Activated CD8-positive, alpha-beta T cell treated with anti-CD3 and anti-CD28 coated beads for 36 hours (primary cell): ENCODE measurements at regions of chr3 and their contacts with region 1.

Region 1: GRCh38 chr3:32467333-32468070 is 35.1 kb downstream of the CMTM6 start:
- DNase-seq: peak; percentile 69
- ATAC-seq: peak; percentile 84
- H3K4me3 Mint-ChIP-seq: no peak overlapping the region
- H3K27ac Mint-ChIP-seq: no peak overlapping the region
- H3K4me1 Mint-ChIP-seq: peaks cover 37% of the 10 kb centered on the region
- H3K27me3 Mint-ChIP-seq: no peaks in the 10 kb centered on the region
- CTCF ChIP-seq: peak; percentile 97

Region 2: GRCh38 chr3:32296256-32297204 is 171.0 kb before region 1 on chr3:
- CTCF ChIA-PET with region 1: interaction called, 21 read pairs
- POLR2A ChIA-PET with region 1: no interaction called
- intact Hi-C with region 1: no loop called
- DNase-seq: peak; percentile 72
- ATAC-seq: peak; percentile 81
- H3K4me3 Mint-ChIP-seq: no peak overlapping the region
- H3K27ac Mint-ChIP-seq: peak overlapping the region; percentile 55
- H3K4me1 Mint-ChIP-seq: peaks cover 16% of the 10 kb centered on the region
- H3K27me3 Mint-ChIP-seq: no peaks in the 10 kb centered on the region
- CTCF ChIP-seq: peak; percentile 88

Region 3: GRCh38 chr3:32384938-32385337 is 82.6 kb before region 1 on chr3:
- CTCF ChIA-PET with region 1: interaction called, 56 read pairs
- POLR2A ChIA-PET with region 1: no interaction called
- intact Hi-C with region 1: no loop called
- DNase-seq: no peak
- ATAC-seq: no peak
- H3K4me3 Mint-ChIP-seq: no peak overlapping the region
- H3K27ac Mint-ChIP-seq: no peak overlapping the region
- H3K4me1 Mint-ChIP-seq: peaks cover 12% of the 10 kb centered on the region
- H3K27me3 Mint-ChIP-seq: no peaks in the 10 kb centered on the region
- CTCF ChIP-seq: no peak

Region 4: GRCh38 chr3:32401556-32402081 is 65.9 kb before region 1 on chr3:
- CTCF ChIA-PET with region 1: interaction called, 42 read pairs
- POLR2A ChIA-PET with region 1: interaction called, 6 read pairs
- intact Hi-C with region 1: loop called (anchors 5 kb)
- DNase-seq: peak; percentile 78
- ATAC-seq: peak; percentile 77
- H3K4me3 Mint-ChIP-seq: peak overlapping the region; percentile 91
- H3K27ac Mint-ChIP-seq: peak overlapping the region; percentile 100
- H3K4me1 Mint-ChIP-seq: peaks cover 71% of the 10 kb centered on the region
- H3K27me3 Mint-ChIP-seq: no peaks in the 10 kb centered on the region
- CTCF ChIP-seq: no peak

Region 5: DNA sequence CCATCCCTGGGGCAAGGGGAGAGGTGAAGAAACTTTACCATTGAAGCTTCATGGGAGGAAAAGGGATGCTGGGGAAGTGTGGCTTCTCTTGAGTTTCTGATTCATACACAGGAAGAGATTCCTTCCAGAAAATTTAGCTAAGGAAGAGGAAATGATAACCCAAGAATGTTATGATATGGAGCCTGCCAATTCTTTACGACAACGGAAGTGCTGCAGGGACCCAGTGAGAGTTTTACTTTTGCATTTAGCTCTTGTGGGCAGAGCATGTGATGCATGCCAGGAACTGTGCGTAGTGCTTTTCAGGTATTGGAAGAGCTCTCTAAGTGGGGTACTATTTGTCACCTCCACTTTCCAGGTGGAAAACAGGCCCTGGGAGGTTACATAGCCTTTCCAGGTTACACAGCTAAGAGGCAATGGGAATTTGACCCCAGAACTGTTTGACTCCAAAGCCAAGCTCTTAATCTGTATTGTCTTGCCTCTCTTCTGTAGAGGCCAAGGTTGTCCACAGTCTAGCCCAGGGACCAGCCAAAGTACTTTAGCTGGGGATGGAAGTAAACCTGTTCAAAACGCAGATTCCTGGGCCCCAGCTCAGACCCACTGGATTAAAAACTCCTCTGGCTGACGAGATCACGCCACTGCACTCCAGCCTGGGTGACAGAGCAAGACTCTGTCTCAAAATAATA is 52.8 kb before region 1 on chr3:
- CTCF ChIA-PET with region 1: interaction called, 47 read pairs
- POLR2A ChIA-PET with region 1: no interaction called
- intact Hi-C with region 1: no loop called
- DNase-seq: peak; percentile 67
- ATAC-seq: peak; percentile 89
- H3K4me3 Mint-ChIP-seq: peak overlapping the region; percentile 39
- H3K27ac Mint-ChIP-seq: peak overlapping the region; percentile 92
- H3K4me1 Mint-ChIP-seq: peaks cover 70% of the 10 kb centered on the region
- H3K27me3 Mint-ChIP-seq: no peaks in the 10 kb centered on the region
- CTCF ChIP-seq: no peak

Region 6: GRCh38 chr3:32428092-32429068 is 39.1 kb before region 1 on chr3:
- CTCF ChIA-PET with region 1: interaction called, 35 read pairs
- POLR2A ChIA-PET with region 1: interaction called, 14 read pairs
- intact Hi-C with region 1: loop called (anchors 5 kb)
- DNase-seq: peak; percentile 74
- ATAC-seq: peak; percentile 28
- H3K4me3 Mint-ChIP-seq: peak overlapping the region; percentile 67
- H3K27ac Mint-ChIP-seq: peak overlapping the region; percentile 90
- H3K4me1 Mint-ChIP-seq: peaks cover 92% of the 10 kb centered on the region
- H3K27me3 Mint-ChIP-seq: no peaks in the 10 kb centered on the region
- CTCF ChIP-seq: no peak

Region 7: GRCh38 chr3:32484436-32484835 is 16.9 kb after region 1 on chr3:
- CTCF ChIA-PET with region 1: interaction called, 28 read pairs
- POLR2A ChIA-PET with region 1: interaction called, 3 read pairs
- intact Hi-C with region 1: no loop called
- DNase-seq: no peak
- ATAC-seq: no peak
- H3K4me3 Mint-ChIP-seq: no peak overlapping the region
- H3K27ac Mint-ChIP-seq: no peak overlapping the region
- H3K4me1 Mint-ChIP-seq: peaks cover 22% of the 10 kb centered on the region
- H3K27me3 Mint-ChIP-seq: no peaks in the 10 kb centered on the region
- CTCF ChIP-seq: no peak

Region 8: GRCh38 chr3:32593903-32594525 is 126.5 kb after region 1 on chr3:
- CTCF ChIA-PET with region 1: no interaction called
- POLR2A ChIA-PET with region 1: no interaction called
- intact Hi-C with region 1: no loop called
- DNase-seq: no peak
- ATAC-seq: no peak
- H3K4me3 Mint-ChIP-seq: no peak overlapping the region
- H3K27ac Mint-ChIP-seq: no peak overlapping the region
- H3K4me1 Mint-ChIP-seq: no peaks in the 10 kb centered on the region
- H3K27me3 Mint-ChIP-seq: peaks cover 5% of the 10 kb centered on the region
- CTCF ChIP-seq: no peak